ENCODE measurements at regions of chr6 and their contacts with region 1.

Region 1: DNA sequence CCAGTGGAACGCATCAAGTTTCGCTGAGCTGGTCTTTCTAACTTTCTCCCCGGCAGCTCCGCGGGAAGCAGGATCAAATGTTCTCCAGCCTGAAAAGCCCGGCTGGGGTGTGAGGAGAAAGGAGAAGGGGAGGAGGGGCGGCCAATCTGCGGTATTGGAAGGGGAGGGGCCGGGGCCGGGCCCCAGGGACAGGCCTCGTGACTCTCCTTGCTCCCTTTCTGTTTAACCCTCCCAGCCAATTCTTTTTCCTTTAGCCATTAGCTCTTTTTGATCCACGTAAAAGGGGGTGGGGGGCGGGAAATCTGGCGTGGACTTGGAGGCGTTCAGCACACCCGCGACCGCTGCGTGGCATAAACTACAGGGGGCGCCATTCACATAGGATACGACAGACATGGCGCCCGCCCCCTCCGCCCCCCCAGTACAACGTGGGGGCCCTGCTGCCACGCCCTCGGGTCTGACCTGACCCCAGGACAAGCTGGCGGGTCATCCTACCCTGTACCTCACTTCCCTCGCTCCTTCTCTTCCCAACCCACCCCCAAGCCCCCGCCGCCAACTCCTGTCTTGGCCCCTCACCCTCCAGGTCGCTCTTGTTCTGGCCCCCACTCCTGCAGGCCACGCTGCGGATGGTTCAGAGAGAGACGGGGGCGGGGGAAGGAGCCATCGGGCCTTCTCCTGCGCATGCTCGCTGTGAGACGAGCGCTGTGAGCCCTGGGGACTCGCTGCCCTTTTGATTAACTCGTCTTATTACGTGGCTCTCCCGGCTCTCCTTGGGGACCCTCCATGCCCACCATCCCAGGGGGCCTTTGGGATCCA is 7.8 kb upstream of the MDGA1 start:
- DNase-seq: peak; percentile 83
- H3K4me3 Mint-ChIP-seq: peak overlapping the region; percentile 66
- H3K27ac Mint-ChIP-seq: peak overlapping the region; percentile 60
- H3K4me1 Mint-ChIP-seq: peaks cover 9% of the 10 kb centered on the region
- H3K27me3 Mint-ChIP-seq: no peaks in the 10 kb centered on the region

Region 2: GRCh38 chr6:38012573-38012972 is 307.1 kb after region 1 on chr6:
- CTCF ChIA-PET with region 1: no interaction called
- POLR2A ChIA-PET with region 1: no interaction called
- intact Hi-C with region 1: loop called (anchors 5 kb)
- DNase-seq: peak; percentile 34
- H3K4me3 Mint-ChIP-seq: no peak overlapping the region
- H3K27ac Mint-ChIP-seq: no peak overlapping the region
- H3K4me1 Mint-ChIP-seq: peaks cover 4% of the 10 kb centered on the region
- H3K27me3 Mint-ChIP-seq: no peaks in the 10 kb centered on the region

Measured in activated CD4-positive, alpha-beta memory T cell treated with anti-CD3 and anti-CD28 coated beads for 36 hours (primary cell).